Aorta (tissue), 5 donors: ENCODE measurements at regions of chr2 and their contacts with region 1.

Region 1: GRCh38 chr2:117738991-117739839 is 75.3 kb upstream of the DDX18 start:
- DNase-seq: no peak
- ATAC-seq: no peak
- H3K4me3 ChIP-seq: no peak overlapping the region
- H3K27ac ChIP-seq: no peak overlapping the region
- H3K4me1 ChIP-seq: no peaks in the 10 kb centered on the region
- H3K27me3 ChIP-seq: no peaks in the 10 kb centered on the region

Region 2: DNA sequence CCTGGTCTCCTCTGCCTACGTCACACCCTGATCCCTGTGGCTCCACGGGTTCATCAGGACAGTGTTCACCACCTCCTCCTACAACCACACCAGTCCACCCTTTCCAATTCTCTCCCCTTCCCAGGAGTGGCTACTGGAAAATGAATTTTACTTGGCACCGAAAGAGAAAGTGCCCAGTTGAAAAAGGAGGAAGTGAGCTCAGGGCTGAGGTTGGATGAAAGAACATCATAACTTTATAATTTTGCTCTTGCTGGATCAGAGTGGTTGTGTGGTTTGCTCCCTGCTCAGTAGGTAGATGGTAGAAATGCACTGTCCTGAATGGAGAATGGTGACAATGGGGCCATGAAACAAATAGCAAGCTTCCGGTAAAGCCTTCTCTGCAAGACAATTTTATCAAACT is 65.0 kb before region 1 on chr2:
- intact Hi-C with region 1: loop called in 1 of 2 experiments (anchors 2 kb)
- DNase-seq: no peak
- ATAC-seq: no peak
- H3K4me3 ChIP-seq: no peak overlapping the region
- H3K27ac ChIP-seq: no peak overlapping the region
- H3K4me1 ChIP-seq: no peaks in the 10 kb centered on the region
- H3K27me3 ChIP-seq: no peaks in the 10 kb centered on the region

Region 3: GRCh38 chr2:117902933-117903332 is 163.7 kb after region 1 on chr2:
- intact Hi-C with region 1: no loop called
- DNase-seq: no peak
- ATAC-seq: no peak
- H3K4me3 ChIP-seq: no peak overlapping the region
- H3K27ac ChIP-seq: no peak overlapping the region
- H3K4me1 ChIP-seq: no peaks in the 10 kb centered on the region
- H3K27me3 ChIP-seq: no peaks in the 10 kb centered on the region